ENCODE measurements at regions of chr7 and their contacts with region 1.

Region 1: DNA sequence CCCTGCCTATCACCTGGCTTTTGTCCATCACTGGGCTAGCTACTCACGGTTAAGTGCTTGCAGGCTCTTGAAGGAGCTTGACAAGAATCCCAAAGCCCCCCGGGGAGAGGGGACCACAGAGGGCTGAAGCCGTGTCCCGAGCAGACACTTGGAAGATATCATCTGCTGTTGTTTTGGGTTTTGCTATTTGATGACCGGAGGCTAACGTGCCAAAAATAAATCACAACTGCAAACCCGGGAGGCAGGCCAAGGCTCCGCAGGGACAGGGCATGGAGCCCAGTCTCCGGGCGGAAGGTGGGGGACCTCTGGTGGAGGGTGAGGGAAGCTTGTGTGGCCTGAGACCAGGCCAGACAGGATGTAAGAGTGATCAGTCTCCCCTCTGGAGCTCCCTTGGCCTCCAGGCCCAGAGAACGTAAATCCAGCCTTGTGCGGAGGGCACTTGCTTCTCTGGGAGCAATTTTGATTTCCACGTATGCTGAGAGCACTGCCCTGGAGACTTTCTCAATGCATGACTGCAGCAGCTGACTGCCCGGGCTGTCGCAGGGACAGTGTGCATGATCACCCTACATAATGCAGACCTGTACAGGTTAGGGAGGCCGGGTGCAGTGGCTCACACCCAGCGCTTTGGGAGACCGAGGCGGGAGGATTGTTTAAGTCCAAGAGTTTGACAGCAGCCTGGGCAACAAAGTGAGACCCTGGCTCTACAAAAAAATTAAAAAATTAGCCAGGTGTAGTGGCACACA is at the start of gene PHKG1:
- DNase-seq: peak; percentile 86 to 90 (median 89)
- ATAC-seq: peak; percentile 81 to 93 (median 90)
- H3K4me3 ChIP-seq: peak within 1 kb of the TSS in 11 of 12 donors; percentile 25 to 56 (median 43)
- H3K27ac ChIP-seq: peak within 1 kb of the TSS; percentile 57 to 94 (median 85)
- H3K4me1 ChIP-seq: peaks cover 0 to 38% (median 18%) of the 10 kb centered on the region in 12 donors
- H3K27me3 ChIP-seq: no peaks in the 10 kb centered on the region
- CTCF ChIP-seq: peak; percentile 47 to 83 (median 72)
- POLR2A ChIP-seq: no peak
- total RNA-seq, gene PHKG1: 5.9 to 150 (median 19.9) TPM

Region 2: DNA sequence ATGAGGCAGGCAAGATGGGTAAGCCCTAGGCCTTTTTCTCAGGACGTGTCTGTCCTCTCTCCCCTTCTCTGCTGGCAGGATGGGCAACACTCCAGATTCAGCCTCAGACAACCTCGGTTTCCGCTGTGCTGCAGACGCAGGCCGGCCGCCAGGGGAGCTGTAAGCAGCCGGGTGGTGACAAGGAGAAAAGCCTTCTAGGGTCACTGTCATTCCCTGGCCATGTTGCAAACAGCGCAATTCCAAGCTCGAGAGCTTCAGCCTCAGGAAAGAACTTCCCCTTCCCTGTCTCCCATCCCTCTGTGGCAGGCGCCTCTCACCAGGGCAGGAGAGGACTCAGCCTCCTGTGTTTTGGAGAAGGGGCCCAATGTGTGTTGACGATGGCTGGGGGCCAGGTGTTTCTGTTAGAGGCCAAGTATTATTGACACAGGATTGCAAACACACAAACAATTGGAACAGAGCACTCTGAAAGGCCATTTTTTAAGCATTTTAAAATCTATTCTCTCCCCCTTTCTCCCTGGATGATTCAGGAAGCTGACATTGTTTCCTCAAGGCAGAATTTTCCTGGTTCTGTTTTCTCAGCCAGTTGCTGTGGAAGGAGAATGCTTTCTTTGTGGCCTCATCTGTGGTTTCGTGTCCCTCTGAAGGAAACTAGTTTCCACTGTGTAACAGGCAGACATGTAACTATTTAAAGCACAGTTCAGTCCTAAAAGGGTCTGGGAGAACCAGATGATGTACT is 13.3 kb before region 1 on chr7:
- intact Hi-C with region 1: loop called in 1 of 10 experiments (anchors 2 kb)
- DNase-seq: peak; percentile 87 to 93 (median 90)
- ATAC-seq: peak; percentile 83 to 89 (median 86)
- H3K4me3 ChIP-seq: peak overlapping the region in 1 of 12 donors; percentile 10
- H3K27ac ChIP-seq: peak overlapping the region; percentile 56 to 96 (median 86)
- H3K4me1 ChIP-seq: peaks cover 10 to 43% (median 35%) of the 10 kb centered on the region in 12 donors
- H3K27me3 ChIP-seq: no peaks in the 10 kb centered on the region
- CTCF ChIP-seq: peak; percentile 49 to 96 (median 82)
- POLR2A ChIP-seq: peak in 1 of 2 donors; percentile 1

Measured in heart left ventricle (tissue), 16 donors.